ENCODE measurements at regions of chr14 and their contacts with region 1.

Region 1: DNA sequence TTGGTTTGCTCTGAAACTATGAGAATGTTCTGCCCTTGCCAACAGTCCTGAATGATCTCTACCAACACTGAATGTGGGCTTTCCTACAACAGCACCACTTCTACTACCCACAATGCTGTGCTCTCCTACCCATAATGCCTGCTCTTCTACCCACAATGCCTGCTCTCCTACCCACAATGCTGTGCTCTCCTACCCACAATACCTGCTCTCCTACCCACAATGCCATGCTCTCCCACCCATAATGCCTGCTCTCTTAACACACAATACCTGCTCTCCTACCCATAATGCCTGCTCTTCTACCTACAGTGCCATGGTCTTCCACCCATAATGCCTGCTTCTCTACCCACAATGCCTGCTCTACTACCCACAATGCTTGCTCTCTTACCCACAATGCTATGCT is 92.3 kb downstream of the KCNK13 start:
- DNase-seq: no peak
- ATAC-seq: no peak

Region 2: DNA sequence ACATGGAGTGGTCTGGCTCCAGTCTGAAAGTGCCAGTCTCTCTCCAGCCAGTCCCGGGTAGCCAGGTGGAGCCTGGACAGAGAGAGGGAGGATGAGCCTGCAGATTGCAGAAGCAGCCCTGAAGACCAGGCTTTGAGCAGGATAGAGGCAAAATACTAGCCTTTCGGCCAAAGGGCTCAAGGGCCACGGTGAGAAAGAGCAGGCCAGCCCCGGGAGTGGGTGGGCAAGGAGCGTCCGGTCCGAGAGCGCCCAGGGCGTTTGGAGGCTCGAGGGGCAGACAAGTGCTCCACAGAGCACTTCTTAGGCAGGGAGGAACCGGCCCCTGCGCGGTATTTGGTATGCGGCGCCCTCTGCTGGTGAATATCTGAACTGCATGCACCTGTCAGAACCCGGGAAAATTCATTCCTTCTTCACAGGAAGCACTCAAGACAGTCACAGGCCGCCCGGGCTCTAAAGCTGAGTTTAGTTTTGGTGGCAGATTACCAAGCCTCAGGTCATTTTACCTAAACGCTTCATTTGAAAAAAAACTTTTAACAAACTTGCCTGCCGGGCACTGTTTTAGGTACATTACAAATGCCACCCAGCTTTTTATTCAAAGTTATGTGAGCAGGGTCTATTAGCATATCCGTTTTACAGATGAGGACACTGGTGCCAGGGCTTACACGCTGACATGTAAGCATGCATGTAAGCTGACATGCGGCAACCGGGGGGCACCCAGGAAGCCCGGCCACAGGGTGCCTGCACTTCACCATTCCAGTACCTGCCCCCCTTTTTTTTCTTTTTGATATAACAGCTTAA is 81.3 kb after region 1 on chr14:
- intact Hi-C with region 1: no loop called
- DNase-seq: peak; percentile 70
- ATAC-seq: peak; percentile 34

Region 3: DNA sequence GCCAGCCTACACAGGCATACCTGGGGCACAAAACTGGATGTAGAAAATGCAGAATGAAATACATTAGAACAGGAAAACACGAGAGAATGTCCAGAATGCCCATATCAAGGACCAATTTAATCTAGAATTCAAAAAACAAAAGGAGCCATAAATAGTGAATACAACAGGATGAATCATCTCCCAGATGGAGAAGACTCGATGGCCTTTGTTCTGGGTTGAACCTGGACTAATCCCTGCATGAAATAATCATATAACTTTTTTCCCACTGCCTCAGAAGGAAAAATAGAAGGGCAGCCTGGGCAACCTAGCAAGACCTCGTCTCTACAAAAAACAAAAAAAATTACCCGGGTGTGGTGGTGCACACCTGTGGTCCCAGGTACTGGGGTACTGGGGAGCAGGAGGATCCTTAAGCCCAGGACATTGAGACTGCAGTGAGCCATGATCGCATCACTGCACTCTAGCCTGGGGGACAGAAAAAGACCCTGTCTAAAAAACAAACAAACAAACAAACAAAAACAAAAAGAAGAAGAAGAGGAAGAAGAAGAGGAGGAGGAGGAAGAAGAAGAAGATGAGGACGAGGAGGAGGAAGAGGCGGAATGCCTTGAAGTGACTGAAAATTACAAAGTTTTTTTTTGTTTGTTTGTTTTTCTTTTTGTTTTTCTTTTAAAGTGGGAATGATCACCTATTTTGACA is 207.9 kb after region 1 on chr14:
- intact Hi-C with region 1: no loop called
- DNase-seq: no peak
- ATAC-seq: no peak

Region 4: DNA sequence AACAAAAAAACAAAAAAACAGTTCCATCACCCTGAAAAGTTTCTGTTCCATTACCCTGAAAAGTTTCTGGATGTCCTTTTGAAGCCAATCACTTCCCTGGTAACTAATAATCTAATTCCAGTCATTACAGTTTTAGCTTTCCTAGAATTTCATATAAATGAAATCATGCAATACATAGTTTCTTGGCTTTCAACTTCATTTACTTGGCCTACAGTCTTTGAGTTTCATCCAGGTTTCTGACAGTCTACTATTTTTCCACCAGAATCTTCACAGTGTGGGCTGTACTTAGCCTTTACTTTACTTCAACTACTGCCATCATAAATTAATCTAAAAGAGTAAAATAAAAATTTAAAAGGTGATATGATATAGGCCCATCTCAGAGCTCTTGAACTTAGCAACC is 850.9 kb after region 1 on chr14:
- intact Hi-C with region 1: loop called (anchors 5 kb)
- DNase-seq: no peak
- ATAC-seq: no peak

Measured in sciatic nerve (tissue), 2 donors.